IMR-90 (cell line): ENCODE measurements at regions of chr20 and their contacts with region 1.

Region 1: DNA sequence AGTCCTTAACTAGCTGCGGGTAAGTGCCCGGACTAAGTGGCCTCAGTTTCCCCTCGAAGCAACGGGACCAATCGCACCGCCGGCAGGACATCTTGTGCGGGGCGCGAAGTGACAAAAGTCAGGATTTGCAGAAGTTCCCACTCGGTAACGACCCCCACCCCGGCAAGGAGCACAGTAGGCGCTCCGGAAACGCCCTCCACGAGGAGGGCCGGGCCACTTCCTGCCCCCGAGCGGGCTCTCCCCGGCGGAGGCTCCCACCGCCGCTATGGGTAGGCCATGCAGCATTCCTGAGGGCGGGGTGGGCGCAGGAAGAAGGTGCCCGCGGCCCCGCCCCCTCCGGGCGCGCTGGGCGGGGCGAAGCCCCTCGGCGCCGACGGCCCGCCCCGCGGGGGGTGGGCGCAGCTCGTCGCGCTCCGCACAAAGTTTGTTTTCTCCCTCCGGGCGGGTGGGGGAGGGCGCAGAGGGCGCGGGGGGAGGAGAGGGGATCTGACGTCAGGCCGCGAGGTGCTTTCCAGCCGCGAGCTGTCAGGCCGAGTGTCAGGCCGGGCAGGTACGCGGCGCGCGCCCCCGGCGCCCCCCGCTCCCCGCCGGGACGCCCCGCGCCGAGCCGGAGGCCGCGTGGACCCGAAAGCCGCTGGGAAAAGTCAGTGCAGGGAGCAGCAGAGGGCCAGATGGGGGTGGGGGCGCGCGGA is at the start of gene TGIF2:
- DNase-seq: peak; percentile 81
- ATAC-seq: peak; percentile 91
- H3K4me3 ChIP-seq: peak within 1 kb of the TSS; percentile 60
- H3K27ac ChIP-seq: peak within 1 kb of the TSS; percentile 81
- H3K4me1 ChIP-seq: peaks cover 13% of the 10 kb centered on the region
- H3K27me3 ChIP-seq: no peaks in the 10 kb centered on the region
- CTCF ChIP-seq: no peak
- POLR2A ChIP-seq: peak; percentile 61
- RAD21 ChIP-seq: no peak
- total RNA-seq, gene TGIF2: 9.7 and 10.6 TPM in 2 replicates

Region 2: GRCh38 chr20:36506253-36506652 is 67.0 kb before region 1 on chr20:
- CTCF ChIA-PET with region 1: interaction called, 14 read pairs
- POLR2A ChIA-PET with region 1: no interaction called
- dilution Hi-C with region 1: no loop called
- in situ Hi-C with region 1: no loop called
- intact Hi-C with region 1: no loop called
- DNase-seq: no peak
- ATAC-seq: peak; percentile 49
- H3K4me3 ChIP-seq: no peak overlapping the region
- H3K27ac ChIP-seq: no peak overlapping the region
- H3K4me1 ChIP-seq: no peaks in the 10 kb centered on the region
- H3K27me3 ChIP-seq: no peaks in the 10 kb centered on the region
- CTCF ChIP-seq: peak; percentile 38
- POLR2A ChIP-seq: no peak
- RAD21 ChIP-seq: peak; percentile 37

Region 3: GRCh38 chr20:36591854-36592641 is 18.8 kb after region 1 on chr20:
- CTCF ChIA-PET with region 1: no interaction called
- POLR2A ChIA-PET with region 1: interaction called, 16 read pairs
- dilution Hi-C with region 1: no loop called
- in situ Hi-C with region 1: no loop called
- intact Hi-C with region 1: no loop called
- DNase-seq: peak; percentile 51
- ATAC-seq: peak; percentile 84
- H3K4me3 ChIP-seq: no peak overlapping the region
- H3K27ac ChIP-seq: no peak overlapping the region
- H3K4me1 ChIP-seq: no peaks in the 10 kb centered on the region
- H3K27me3 ChIP-seq: no peaks in the 10 kb centered on the region
- CTCF ChIP-seq: peak; percentile 49
- POLR2A ChIP-seq: no peak
- RAD21 ChIP-seq: peak; percentile 40

Region 4: DNA sequence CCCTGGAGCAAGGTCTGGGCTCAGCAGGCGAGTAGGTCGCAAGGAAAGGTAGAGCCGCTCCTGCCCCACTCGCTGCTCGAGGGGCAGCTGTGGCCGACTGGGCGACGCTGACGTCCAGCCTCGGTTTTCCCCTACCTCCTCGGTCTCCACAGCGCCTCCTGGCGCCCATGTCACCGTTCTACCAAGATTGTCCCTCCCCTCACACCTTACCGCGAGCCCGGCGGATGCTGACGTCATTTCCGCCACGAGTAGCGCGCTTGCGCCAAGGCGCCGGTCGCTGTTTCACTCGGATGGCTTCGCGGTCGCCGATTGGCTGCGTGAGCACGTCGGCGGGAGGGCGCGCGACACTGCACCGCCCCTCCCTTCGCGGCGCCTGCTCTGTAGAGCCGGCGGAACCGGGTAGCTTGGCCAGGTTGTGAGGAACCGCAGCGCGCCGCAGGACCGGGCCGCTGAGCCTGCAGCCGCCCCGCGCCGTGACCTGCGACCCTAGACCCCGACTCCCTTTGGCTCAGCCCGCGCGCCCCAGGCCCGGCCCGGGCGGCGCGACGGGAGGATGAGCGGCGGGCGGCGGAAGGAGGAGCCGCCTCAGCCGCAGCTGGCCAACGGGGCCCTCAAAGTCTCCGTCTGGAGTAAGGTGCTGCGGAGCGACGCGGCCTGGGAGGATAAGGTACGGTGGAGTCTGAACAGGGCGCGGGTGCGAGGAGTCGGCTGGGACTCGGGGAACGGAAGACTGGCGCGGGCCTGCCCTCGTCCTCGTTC is 32.3 kb after region 1 on chr20 and contains the start of gene RAB5IF:
- CTCF ChIA-PET with region 1: interaction called, 3 read pairs
- POLR2A ChIA-PET with region 1: no interaction called
- dilution Hi-C with region 1: no loop called
- in situ Hi-C with region 1: no loop called
- intact Hi-C with region 1: loop called (anchors 2 kb)
- DNase-seq: peak; percentile 98
- ATAC-seq: peak; percentile 99
- H3K4me3 ChIP-seq: peak within 1 kb of the TSS; percentile 84
- H3K27ac ChIP-seq: peak within 1 kb of the TSS; percentile 68
- H3K4me1 ChIP-seq: peaks cover 4% of the 10 kb centered on the region; the same call in 1 of the 2 replicates
- H3K27me3 ChIP-seq: no peaks in the 10 kb centered on the region
- CTCF ChIP-seq: peak; percentile 98
- POLR2A ChIP-seq: peak; percentile 80
- RAD21 ChIP-seq: peak; percentile 74
- total RNA-seq, gene RAB5IF: 74.0 and 90.3 TPM in 2 replicates